Thyroid gland (tissue), 4 donors: ENCODE measurements at regions of chr17 and their contacts with region 1.

Region 1: DNA sequence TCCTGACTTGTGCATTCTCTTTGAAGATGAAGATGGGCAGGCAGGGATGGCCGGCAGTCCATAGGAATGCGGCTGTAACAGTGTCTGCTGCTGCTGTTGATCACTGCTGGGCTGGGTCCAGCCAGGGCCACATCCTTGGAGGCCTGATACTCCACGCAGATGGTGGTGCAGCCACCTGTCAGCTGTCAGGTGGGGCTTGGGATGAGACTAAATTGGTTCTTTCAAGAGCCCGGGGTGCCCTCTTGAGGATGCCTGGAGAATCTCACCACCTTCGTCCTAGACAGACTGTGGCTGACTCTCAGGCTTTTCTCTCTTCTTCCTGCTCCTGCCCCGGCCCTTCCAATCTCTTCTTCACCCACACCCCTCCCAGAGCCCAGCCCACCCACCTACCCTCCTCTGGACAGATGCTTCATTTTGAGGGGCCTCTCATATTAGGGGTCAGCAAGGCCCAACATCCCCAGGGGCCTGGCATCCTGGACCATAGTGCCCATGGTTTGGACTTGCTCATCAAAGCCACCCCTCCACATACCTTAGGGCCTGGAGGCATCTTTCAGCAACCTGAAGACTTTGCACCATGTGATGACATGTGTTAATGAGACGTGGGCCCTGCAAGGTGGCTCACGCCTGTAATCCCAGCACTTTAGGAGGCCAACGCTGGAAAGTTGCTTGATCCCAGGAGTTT is 19.1 kb downstream of the OSBPL7 start:
- DNase-seq: peak; percentile 52 to 53
- H3K4me3 ChIP-seq: no peak overlapping the region
- H3K27ac ChIP-seq: no peak overlapping the region
- H3K4me1 ChIP-seq: no peaks in the 10 kb centered on the region
- H3K27me3 ChIP-seq: no peaks in the 10 kb centered on the region
- CTCF ChIP-seq: peak in 4 of 6 experiments; percentile 36 to 64 (median 46)
- POLR2A ChIP-seq: no peak

Region 2: DNA sequence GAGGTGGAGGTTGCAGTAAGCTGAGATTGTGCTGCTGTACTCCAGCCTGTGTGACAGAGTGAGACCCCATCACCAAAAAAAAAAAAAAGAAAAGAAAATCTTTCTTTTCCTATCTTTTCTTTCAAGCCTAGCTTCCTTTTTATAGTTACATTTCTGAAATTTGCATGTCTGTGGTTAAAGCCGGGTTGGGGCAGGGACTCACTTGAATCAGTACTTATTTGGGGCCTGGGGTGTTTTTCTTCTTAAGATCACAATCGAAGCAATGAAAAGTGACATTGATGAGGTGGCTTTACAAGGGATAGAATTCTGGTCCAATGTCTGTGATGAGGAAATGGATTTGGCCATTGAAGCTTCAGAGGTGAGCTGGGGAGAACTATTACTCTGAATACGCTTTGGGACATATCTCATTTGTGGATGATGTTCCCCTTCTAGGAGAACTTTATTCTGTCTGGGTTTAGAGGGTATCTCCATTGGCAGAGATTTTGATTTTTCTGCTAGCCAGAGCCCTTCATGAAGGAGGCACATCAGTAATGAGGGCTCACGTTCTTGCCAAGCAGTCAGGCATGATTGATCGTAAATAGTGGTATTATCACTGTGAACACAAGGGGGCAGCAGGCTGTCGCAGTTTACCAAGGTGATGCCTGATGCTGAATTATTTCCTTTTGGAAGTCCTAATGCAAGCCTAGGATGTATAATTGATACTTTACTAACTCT is 138.4 kb before region 1 on chr17:
- intact Hi-C with region 1: loop called (anchors 10 kb)
- DNase-seq: peak; percentile 64 to 71
- H3K4me3 ChIP-seq: no peak overlapping the region
- H3K27ac ChIP-seq: no peak overlapping the region
- H3K4me1 ChIP-seq: no peaks in the 10 kb centered on the region
- H3K27me3 ChIP-seq: no peaks in the 10 kb centered on the region
- CTCF ChIP-seq: peak; percentile 43 to 78 (median 73)
- POLR2A ChIP-seq: no peak

Region 3: GRCh38 chr17:47852093-47852949 is 49.8 kb after region 1 on chr17:
- intact Hi-C with region 1: no loop called
- DNase-seq: no peak
- H3K4me3 ChIP-seq: no peak overlapping the region
- H3K27ac ChIP-seq: no peak overlapping the region
- H3K4me1 ChIP-seq: peaks cover 11 to 27% of the 10 kb centered on the region in 2 donors
- H3K27me3 ChIP-seq: peaks cover 32% of the 10 kb centered on the region
- CTCF ChIP-seq: no peak
- POLR2A ChIP-seq: no peak

Region 4: DNA sequence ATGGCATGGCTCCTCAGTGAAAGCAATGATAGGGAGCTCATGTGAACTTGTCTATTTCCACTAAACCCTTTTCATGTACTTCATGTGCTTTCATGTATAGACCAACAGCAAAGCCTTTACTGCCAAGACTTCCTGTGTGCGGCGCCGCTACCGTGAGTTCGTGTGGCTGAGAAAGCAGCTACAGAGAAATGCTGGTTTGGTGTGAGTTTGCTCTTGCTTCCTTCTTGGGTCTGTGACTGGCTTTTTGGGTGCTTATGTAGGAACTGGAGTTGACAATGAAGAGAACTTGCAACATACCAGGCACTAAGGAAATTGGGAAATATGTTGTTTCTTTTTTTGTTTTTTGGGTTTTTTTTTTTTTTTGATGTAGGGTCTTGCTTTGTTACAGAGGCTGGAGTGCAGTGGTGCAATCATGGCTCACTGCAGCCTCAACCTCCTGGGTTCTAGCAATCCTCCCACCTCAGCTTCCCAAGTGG is 310.8 kb after region 1 on chr17:
- intact Hi-C with region 1: no loop called
- DNase-seq: no peak
- H3K4me3 ChIP-seq: no peak overlapping the region
- H3K27ac ChIP-seq: no peak overlapping the region
- H3K4me1 ChIP-seq: peaks cover 16 to 26% of the 10 kb centered on the region in 2 donors
- H3K27me3 ChIP-seq: no peaks in the 10 kb centered on the region
- CTCF ChIP-seq: no peak
- POLR2A ChIP-seq: no peak